SK-N-SH (cell line): ENCODE measurements at regions of chr13 and their contacts with region 1.

Region 1: DNA sequence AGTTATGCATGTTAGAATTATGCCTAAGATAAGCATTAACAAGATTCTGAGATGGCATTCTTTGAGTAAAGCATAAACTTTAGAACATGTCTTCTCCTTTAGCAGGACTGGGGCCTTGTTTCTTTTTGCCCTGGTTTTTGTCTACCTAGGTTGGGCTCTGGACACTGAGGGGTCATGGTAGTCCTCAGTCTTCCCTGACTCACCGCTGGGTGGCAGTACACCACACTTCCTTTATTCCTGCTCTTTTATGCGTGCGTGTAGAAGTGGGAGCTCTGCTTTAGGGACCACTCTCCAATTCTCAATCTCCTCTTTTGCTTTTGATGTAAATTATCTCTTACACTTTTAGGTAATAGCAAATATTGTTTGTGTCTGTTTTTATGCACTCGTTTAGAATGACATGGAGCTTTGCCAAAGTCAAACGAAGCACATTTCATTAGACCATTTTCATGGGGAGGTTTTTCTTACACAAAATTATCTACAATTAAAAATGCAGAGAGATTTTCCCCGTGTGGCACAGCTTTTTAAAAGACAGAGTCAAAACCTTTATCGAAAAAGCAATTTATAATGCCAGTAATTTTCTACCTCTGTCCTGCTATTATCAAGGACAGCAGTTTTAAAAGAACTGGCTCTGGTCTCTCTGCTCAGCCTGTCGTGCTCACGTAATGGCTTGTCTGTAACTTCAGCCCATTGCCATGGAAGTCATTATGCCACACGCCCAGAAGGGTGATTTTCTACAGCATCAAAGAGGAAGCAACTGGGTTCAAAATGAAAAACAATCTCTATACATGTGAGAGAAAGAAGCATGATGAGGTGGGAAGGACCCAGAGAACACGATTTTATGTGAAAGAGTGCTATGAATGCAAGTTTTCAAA is 413.9 kb downstream of the COG6 start:
- DNase-seq: peak; percentile 64
- H3K4me3 ChIP-seq: no peak overlapping the region
- H3K27ac ChIP-seq: no peak overlapping the region
- H3K4me1 ChIP-seq: peaks cover 1 to 8% of the 10 kb centered on the region in 2 experiments
- H3K27me3 ChIP-seq: no peaks in the 10 kb centered on the region
- CTCF ChIP-seq: peak; percentile 79
- EP300 ChIP-seq: no peak
- RAD21 ChIP-seq: peak; percentile 85

Region 2: GRCh38 chr13:39684531-39685137 is 384.8 kb before region 1 on chr13:
- CTCF ChIA-PET with region 1: interaction called, 14 read pairs
- POLR2A ChIA-PET with region 1: no interaction called
- DNase-seq: peak; percentile 23
- H3K4me3 ChIP-seq: no peak overlapping the region
- H3K27ac ChIP-seq: no peak overlapping the region
- H3K4me1 ChIP-seq: no peaks in the 10 kb centered on the region; a peak in 1 of 4 replicates
- H3K27me3 ChIP-seq: no peaks in the 10 kb centered on the region
- CTCF ChIP-seq: peak; percentile 67
- EP300 ChIP-seq: no peak
- RAD21 ChIP-seq: peak; percentile 52

Region 3: DNA sequence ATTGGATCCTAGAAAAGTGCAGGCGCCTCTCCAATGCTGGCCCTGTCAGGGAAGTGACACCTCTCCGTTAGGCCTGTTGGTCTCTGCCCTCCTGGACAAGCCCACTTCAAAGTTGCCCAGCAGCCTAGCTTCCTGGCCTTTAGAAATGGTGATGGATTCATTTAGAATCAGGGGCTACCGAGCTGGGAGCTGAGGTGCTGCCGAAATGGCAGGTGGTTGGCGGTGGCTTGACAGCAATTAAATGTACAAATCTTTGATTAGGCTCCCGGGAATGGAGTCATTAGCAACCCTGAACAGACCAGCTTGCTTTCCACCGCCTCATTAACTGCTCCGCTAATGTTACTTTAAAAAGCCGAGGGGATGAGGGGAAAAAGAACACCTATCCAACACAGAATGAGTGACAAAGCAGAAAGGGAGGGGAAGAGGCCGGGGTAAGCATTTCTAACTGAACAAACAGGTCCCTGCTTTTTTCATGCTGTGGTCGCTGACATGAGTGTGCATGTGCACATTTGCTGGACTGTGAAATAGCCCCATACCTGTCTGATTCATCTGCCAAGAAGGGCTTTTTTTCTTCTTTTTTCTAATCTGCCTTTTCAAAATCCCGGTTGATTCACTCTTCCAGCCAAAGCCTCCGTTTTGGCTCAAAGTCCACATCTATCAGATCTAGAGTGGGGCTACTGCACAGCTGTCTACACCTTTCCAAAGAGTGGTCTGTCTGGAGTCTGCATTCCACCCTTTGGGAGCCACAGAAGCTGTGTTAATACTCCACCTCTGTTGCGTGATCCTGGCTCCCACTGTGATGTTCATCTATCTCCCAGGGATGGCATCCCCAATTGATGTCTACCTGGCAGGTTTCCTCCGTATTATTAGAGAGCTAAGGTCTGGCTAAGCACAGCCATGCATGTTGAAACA is 17.9 kb after region 1 on chr13:
- CTCF ChIA-PET with region 1: interaction called, 24 read pairs
- POLR2A ChIA-PET with region 1: no interaction called
- DNase-seq: no peak
- H3K4me3 ChIP-seq: no peak overlapping the region
- H3K27ac ChIP-seq: no peak overlapping the region
- H3K4me1 ChIP-seq: no peaks in the 10 kb centered on the region
- H3K27me3 ChIP-seq: no peaks in the 10 kb centered on the region
- CTCF ChIP-seq: no peak
- EP300 ChIP-seq: no peak
- RAD21 ChIP-seq: no peak